Right ventricle myocardium inferior (tissue), 1 donor: ENCODE measurements at regions of chr1 and their contacts with region 1.

Region 1: DNA sequence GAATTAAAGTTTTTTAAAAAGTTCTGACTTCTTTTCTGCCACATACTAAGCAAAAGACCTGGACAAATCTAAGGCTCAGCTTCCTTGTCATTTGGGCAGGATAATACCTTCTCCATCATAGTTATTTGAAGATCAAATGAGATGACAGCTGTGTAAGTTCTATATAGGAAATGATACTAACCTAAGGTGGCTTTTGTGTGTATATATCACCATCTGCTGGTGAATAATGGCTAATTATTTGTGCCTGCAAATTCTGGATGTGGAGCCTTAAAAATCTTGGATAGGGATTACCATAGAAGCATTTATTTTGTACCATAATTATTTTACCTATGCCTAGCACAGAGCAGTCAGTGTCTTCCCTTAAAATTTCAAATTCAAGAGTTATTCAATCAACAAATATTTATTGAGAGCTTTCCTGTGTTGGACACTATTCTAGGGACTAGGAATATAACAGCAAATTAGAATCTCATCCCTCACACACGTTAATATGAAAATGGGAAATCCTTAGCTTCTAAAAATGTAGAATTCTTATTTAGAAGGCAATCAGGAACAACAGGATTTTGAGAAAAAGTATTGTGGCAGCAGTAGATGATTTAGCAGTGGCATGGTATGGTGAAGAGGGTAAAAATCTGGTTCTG is 89.8 kb downstream of the TMEM200B start:
- DNase-seq: no peak
- ATAC-seq: no peak

Region 2: GRCh38 chr1:28789412-28789811 is 244.5 kb before region 1 on chr1:
- intact Hi-C with region 1: loop called (anchors 5 kb)
- DNase-seq: no peak
- ATAC-seq: no peak